GM12878 (cell line): ENCODE measurements at regions of chr1 and their contacts with region 1.

Region 1: GRCh38 chr1:165392634-165393571 is 36.4 kb upstream of the LMX1A start:
- DNase-seq: peak; percentile 64
- ATAC-seq: peak; percentile 99
- H3K4me3 ChIP-seq: no peak overlapping the region
- H3K27ac ChIP-seq: no peak overlapping the region
- H3K4me1 ChIP-seq: peaks cover 9% of the 10 kb centered on the region; the same call in 1 of the 2 replicates
- H3K27me3 ChIP-seq: peaks cover 1 to 3% of the 10 kb centered on the region in 2 experiments; a peak in 2 of 4 replicates
- CTCF ChIP-seq: peak; percentile 95 to 96 (median 95)
- EP300 ChIP-seq: peak in 1 of 2 experiments; percentile 15; a peak in 2 of 4 replicates
- POLR2A ChIP-seq: no peak
- RAD21 ChIP-seq: peak; percentile 88

Region 2: DNA sequence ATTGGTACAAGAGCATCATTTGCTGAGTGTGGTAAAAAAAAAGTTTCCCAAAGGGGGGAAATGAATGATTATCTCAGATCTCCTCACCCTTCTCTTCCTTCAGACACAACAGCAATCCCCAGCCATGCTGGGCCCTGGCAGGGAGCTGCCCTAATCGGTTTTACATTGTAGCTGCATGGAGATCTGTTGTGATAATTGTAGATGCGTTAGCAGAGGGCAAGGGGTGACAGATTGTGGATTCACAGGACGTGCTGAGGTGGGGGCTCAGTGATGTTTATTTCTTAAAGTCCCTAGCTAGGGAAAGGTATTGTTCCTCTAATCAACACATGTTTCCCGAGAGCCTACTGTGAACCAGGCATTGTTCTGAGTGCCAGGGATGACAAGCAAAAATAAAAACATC is 529.8 kb before region 1 on chr1:
- CTCF ChIA-PET with region 1: no interaction called
- POLR2A ChIA-PET with region 1: no interaction called
- RAD21 ChIA-PET with region 1: no interaction called
- SMC1A ChIA-PET with region 1: no interaction called
- in situ Hi-C with region 1: no loop called
- intact Hi-C with region 1: no loop called
- DNase-seq: no peak
- ATAC-seq: no peak
- H3K4me3 ChIP-seq: no peak overlapping the region
- H3K27ac ChIP-seq: no peak overlapping the region
- H3K4me1 ChIP-seq: no peaks in the 10 kb centered on the region
- H3K27me3 ChIP-seq: 0 out of 4 replicates have a peak, but pooled peaks cover 0 to 3% of the 10 kb centered on the region in 2 experiments
- CTCF ChIP-seq: no peak
- EP300 ChIP-seq: no peak
- POLR2A ChIP-seq: no peak
- RAD21 ChIP-seq: no peak

Region 3: DNA sequence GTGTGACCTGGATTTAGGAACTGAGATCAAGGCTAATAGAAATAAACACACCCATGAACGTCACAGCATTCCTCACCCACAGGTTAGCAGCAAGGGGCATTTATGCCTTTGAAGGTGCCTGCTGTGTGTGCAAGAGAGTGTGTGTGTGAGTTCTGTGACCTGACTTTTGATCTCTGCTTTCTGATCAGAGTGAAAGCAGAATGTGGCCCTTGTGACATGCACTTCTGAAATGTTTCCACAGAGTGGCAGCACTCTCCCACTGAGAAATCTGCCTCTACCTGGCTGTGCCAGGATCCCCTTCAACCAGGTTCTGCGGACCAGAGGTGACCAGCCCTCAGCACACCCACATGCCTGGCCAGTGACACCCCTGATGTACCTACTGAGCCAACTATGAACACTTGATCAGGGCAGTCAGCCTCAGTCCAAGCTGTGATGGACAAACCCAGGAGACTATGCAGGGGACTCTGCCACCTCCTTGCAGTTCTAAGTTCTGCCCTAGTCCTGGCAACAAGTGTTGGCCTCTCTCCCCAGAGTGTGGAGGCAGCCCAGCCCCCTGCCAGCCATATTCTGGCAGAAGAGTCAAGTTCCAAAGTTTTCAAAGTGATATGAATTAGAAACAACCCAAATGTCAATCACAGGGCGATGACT is 11.1 kb after region 1 on chr1:
- CTCF ChIA-PET with region 1: interaction called, 10 read pairs
- POLR2A ChIA-PET with region 1: no interaction called
- RAD21 ChIA-PET with region 1: interaction called, 3 read pairs
- SMC1A ChIA-PET with region 1: interaction called, 7 read pairs
- in situ Hi-C with region 1: no loop called
- intact Hi-C with region 1: no loop called
- DNase-seq: no peak
- ATAC-seq: peak; percentile 90
- H3K4me3 ChIP-seq: no peak overlapping the region
- H3K27ac ChIP-seq: no peak overlapping the region
- H3K4me1 ChIP-seq: no peaks in the 10 kb centered on the region
- H3K27me3 ChIP-seq: peaks cover 0 to 3% of the 10 kb centered on the region in 2 experiments; a peak in 2 of 4 replicates
- CTCF ChIP-seq: peak; percentile 66 to 71 (median 69); a peak in 5 of 6 replicates
- EP300 ChIP-seq: no peak
- POLR2A ChIP-seq: no peak
- RAD21 ChIP-seq: peak; percentile 55

Region 4: GRCh38 chr1:165520646-165521045 is 127.7 kb after region 1 on chr1:
- CTCF ChIA-PET with region 1: no interaction called
- POLR2A ChIA-PET with region 1: no interaction called
- RAD21 ChIA-PET with region 1: no interaction called
- SMC1A ChIA-PET with region 1: no interaction called
- in situ Hi-C with region 1: no loop called
- intact Hi-C with region 1: no loop called
- DNase-seq: no peak
- ATAC-seq: no peak
- H3K4me3 ChIP-seq: no peak overlapping the region
- H3K27ac ChIP-seq: no peak overlapping the region
- H3K4me1 ChIP-seq: no peaks in the 10 kb centered on the region
- H3K27me3 ChIP-seq: no peaks in the 10 kb centered on the region
- CTCF ChIP-seq: no peak
- EP300 ChIP-seq: no peak
- POLR2A ChIP-seq: no peak
- RAD21 ChIP-seq: no peak

Region 5: DNA sequence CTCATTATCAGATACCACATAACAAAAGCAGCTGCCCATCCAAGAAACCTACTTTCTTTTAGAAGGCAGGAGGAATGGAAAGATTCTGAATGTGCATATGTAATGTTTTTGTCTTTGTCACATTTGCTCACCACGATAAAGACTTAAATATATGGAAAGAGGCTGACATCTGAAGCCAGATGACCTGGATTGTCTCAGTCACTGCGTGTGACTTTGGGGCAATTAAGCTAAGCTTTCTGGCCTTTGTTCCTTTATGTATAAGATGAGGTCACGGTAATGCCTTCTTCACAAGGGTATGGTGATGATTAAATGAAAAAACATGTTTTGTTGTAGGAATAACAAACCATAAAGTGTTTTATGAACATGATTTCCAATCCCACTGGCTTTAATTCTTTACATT is 193.5 kb after region 1 on chr1:
- CTCF ChIA-PET with region 1: interaction called, 176 read pairs
- POLR2A ChIA-PET with region 1: interaction called, 5 read pairs
- RAD21 ChIA-PET with region 1: interaction called, 5 read pairs
- SMC1A ChIA-PET with region 1: interaction called, 109 read pairs
- in situ Hi-C with region 1: loop called (anchors 5 kb)
- intact Hi-C with region 1: no loop called
- DNase-seq: no peak
- ATAC-seq: no peak
- H3K4me3 ChIP-seq: no peak overlapping the region
- H3K27ac ChIP-seq: no peak overlapping the region
- H3K4me1 ChIP-seq: no peaks in the 10 kb centered on the region
- H3K27me3 ChIP-seq: peaks cover 0 to 11% of the 10 kb centered on the region in 2 experiments; a peak in 1 of 4 replicates
- CTCF ChIP-seq: no peak
- EP300 ChIP-seq: no peak
- POLR2A ChIP-seq: no peak
- RAD21 ChIP-seq: no peak

Region 6: GRCh38 chr1:165659581-165659895 is 266.6 kb after region 1 on chr1:
- CTCF ChIA-PET with region 1: no interaction called
- POLR2A ChIA-PET with region 1: no interaction called
- RAD21 ChIA-PET with region 1: no interaction called
- SMC1A ChIA-PET with region 1: no interaction called
- in situ Hi-C with region 1: no loop called
- intact Hi-C with region 1: loop called (anchors 10 kb)
- DNase-seq: no peak
- ATAC-seq: no peak
- H3K4me3 ChIP-seq: no peak overlapping the region
- H3K27ac ChIP-seq: no peak overlapping the region
- H3K4me1 ChIP-seq: no peaks in the 10 kb centered on the region
- H3K27me3 ChIP-seq: no peaks in the 10 kb centered on the region
- CTCF ChIP-seq: no peak
- EP300 ChIP-seq: no peak
- POLR2A ChIP-seq: no peak
- RAD21 ChIP-seq: no peak

Region 7: DNA sequence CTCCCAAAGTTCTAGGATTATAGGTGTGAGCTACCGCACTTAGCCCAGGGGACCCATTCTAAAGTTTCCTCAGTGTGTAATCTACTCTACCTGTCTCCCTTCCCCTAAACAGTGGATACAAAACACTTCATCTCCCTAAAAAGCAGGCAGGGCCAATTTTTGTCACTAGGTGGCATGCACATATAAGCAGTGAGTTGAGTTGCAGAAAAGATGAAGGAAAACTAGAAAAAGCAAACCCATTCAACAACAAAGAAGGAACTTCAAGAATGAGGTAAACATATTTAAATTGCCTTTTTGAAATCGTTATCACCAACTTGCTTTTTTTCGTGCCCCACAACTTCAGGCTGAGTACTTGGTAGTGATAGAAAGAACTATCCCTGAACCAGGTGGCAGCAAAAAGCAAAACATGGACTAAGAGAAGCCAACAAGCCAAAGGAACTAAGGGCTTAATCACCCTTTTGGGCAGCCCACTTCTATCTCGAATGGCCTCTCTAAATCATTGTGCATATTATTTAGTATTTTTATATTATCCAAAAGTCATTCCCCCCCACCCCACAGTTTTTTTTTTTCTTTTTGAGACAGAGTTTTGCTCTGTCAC is 325.1 kb after region 1 on chr1:
- CTCF ChIA-PET with region 1: no interaction called
- POLR2A ChIA-PET with region 1: no interaction called
- RAD21 ChIA-PET with region 1: no interaction called
- SMC1A ChIA-PET with region 1: no interaction called
- in situ Hi-C with region 1: no loop called
- intact Hi-C with region 1: loop called (anchors 10 kb)
- DNase-seq: no peak
- ATAC-seq: peak; percentile 88
- H3K4me3 ChIP-seq: no peak overlapping the region
- H3K27ac ChIP-seq: no peak overlapping the region
- H3K4me1 ChIP-seq: no peaks in the 10 kb centered on the region
- H3K27me3 ChIP-seq: no peaks in the 10 kb centered on the region
- CTCF ChIP-seq: peak; percentile 73 to 84 (median 82)
- EP300 ChIP-seq: no peak
- POLR2A ChIP-seq: no peak
- RAD21 ChIP-seq: peak; percentile 99